OCI-LY7 (cell line): ENCODE measurements at regions of chr6 and their contacts with region 1.

Region 1: DNA sequence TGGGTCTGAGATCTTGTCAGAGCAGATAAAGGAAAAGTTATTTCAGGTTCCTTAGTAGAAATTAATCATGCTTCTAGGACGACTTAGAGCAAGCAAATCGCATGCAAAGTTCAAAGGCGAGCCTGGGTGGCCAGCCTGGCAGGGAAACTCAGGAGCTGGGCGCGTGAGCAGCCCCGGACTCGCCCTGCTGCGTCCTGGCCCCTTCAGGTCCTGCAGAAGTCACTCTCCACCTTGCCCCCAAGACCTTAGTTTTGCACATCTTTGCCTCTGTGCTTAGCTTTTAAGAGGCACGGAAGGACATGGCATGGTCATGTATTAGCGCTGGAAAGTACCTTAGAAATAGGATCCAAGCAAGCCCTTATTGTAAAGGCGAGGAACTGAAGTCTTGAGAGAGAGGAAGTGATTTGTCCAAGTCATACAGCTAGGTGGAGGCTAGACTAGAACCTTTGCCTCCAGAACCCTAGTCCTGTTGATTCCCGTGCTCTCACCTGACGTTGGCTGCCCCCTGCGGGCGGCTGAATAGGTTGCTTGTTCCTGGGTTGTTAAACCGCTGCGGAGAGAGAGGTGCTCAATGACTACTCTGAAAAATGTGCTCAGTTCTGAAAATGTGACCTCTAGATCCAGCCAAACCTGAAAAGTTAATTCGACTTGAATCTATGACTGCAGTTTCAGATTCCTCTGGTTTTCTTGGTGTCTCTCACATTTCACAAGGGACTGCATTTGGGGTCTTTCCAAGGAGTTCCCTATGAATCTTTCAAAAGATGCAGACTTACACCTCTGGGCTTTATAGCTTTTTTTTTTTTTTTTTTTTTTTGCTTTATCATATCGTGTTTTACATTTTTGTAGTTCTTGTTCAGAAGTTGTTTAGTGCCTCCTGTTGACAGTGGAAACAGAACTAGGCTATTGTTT is 2.7 kb downstream of the MYB start:
- DNase-seq: peak; percentile 95
- H3K4me3 ChIP-seq: peak overlapping the region; percentile 97
- H3K27ac ChIP-seq: peak overlapping the region; percentile 84
- H3K4me1 ChIP-seq: peaks cover 32% of the 10 kb centered on the region
- CTCF ChIP-seq: peak; percentile 94

Region 2: GRCh38 chr6:134918418-134918961 is 265.3 kb before region 1 on chr6:
- CTCF ChIA-PET with region 1: no interaction called
- POLR2A ChIA-PET with region 1: no interaction called
- intact Hi-C with region 1: no loop called
- DNase-seq: no peak
- H3K4me3 ChIP-seq: no peak overlapping the region
- H3K27ac ChIP-seq: no peak overlapping the region
- H3K4me1 ChIP-seq: no peaks in the 10 kb centered on the region
- CTCF ChIP-seq: no peak

Region 3: DNA sequence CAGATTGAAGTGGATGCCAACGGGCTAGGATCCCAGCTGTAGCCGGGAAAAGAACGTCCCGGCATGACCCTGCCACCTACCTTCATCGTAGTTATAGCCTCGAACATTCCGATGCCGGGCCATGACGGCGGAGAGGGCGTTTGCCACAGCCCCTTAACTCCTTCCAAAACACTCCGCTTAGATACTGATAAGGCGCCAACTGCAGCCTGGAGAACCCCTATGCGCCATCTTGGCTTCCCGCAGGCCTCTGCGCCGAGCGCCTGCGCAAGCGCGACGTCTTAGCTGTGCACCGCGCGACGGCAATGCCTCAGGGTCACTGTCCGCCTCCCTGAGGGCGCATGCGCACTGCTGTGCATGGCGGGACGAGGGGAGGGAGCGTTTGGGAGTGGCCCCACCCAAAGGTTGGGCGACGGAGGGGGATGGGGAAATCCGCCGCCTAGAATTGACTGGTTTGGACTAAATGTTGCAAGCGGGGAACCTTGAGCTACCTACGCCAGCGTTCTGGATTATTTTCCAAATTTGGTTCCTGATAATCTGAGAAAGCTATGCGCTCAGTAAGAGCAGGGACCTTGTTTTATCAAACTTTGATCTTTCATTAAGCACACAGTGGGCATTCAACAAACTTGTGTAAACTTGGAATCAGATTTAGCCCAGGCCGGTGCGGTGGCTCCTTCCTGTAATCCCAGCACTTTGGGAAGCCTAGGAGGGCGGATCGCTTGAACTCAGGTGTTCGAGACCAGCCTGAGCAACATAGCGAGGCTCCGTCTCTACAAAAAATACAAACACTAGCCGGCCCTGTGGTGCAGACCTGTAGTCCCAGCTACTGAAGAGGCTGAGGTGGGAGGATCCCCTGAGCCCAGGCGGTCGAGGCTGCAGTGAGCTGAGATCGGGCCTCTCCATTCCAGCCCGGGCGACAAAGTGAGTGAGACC is 129.0 kb before region 1 on chr6 and contains the start of gene HBS1L:
- CTCF ChIA-PET with region 1: no interaction called
- POLR2A ChIA-PET with region 1: interaction called, 6 read pairs
- intact Hi-C with region 1: loop called (anchors 1 kb)
- DNase-seq: peak; percentile 99
- H3K4me3 ChIP-seq: peak within 1 kb of the TSS; percentile 93
- H3K27ac ChIP-seq: peak within 1 kb of the TSS; percentile 64
- H3K4me1 ChIP-seq: peaks cover 26% of the 10 kb centered on the region
- CTCF ChIP-seq: no peak
- total RNA-seq, gene HBS1L: 82.9 and 95.4 TPM in 2 replicates

Region 4: GRCh38 chr6:135145063-135145800 is 38.6 kb before region 1 on chr6:
- CTCF ChIA-PET with region 1: interaction called, 3 read pairs
- POLR2A ChIA-PET with region 1: interaction called, 9 read pairs
- intact Hi-C with region 1: loop called (anchors 1 kb)
- DNase-seq: peak; percentile 74
- H3K4me3 ChIP-seq: peak overlapping the region; percentile 7
- H3K27ac ChIP-seq: peak overlapping the region; percentile 44
- H3K4me1 ChIP-seq: peaks cover 50% of the 10 kb centered on the region
- CTCF ChIP-seq: peak; percentile 99

Region 5: GRCh38 chr6:135267085-135267484 is 83.3 kb after region 1 on chr6:
- CTCF ChIA-PET with region 1: interaction called, 5 read pairs
- POLR2A ChIA-PET with region 1: interaction called, 4 read pairs
- intact Hi-C with region 1: loop called (anchors 2 kb)
- DNase-seq: peak; percentile 98
- H3K4me3 ChIP-seq: peak overlapping the region; percentile 31
- H3K27ac ChIP-seq: peak overlapping the region; percentile 92
- H3K4me1 ChIP-seq: peaks cover 93% of the 10 kb centered on the region
- CTCF ChIP-seq: no peak